Mammary epithelial cell (primary cell): ENCODE measurements at regions of chr10 and their contacts with region 1.

Region 1: GRCh38 chr10:75417522-75417927 is 13.9 kb upstream of the LRMDA start:
- DNase-seq: no peak
- H3K4me3 ChIP-seq: no peak overlapping the region
- H3K27ac ChIP-seq: no peak overlapping the region
- H3K4me1 ChIP-seq: peaks cover 9% of the 10 kb centered on the region
- H3K27me3 ChIP-seq: no peaks in the 10 kb centered on the region
- CTCF ChIP-seq: no peak

Region 2: GRCh38 chr10:74924251-74924951 is 493.1 kb before region 1 on chr10:
- CTCF ChIA-PET with region 1: no interaction called
- dilution Hi-C with region 1: no loop called
- in situ Hi-C with region 1: no loop called
- intact Hi-C with region 1: no loop called
- DNase-seq: peak; percentile 87
- H3K4me3 ChIP-seq: peak overlapping the region in 2 of 3 experiments; percentile 16 to 19
- H3K27ac ChIP-seq: peak overlapping the region; percentile 64
- H3K4me1 ChIP-seq: peaks cover 33% of the 10 kb centered on the region
- H3K27me3 ChIP-seq: no peaks in the 10 kb centered on the region
- CTCF ChIP-seq: no peak

Region 3: GRCh38 chr10:75432176-75432575 is 14.7 kb after region 1 on chr10:
- CTCF ChIA-PET with region 1: no interaction called
- dilution Hi-C with region 1: no loop called
- in situ Hi-C with region 1: no loop called
- intact Hi-C with region 1: no loop called
- DNase-seq: no peak
- H3K4me3 ChIP-seq: no peak overlapping the region
- H3K27ac ChIP-seq: no peak overlapping the region
- H3K4me1 ChIP-seq: peaks cover 42% of the 10 kb centered on the region
- H3K27me3 ChIP-seq: no peaks in the 10 kb centered on the region
- CTCF ChIP-seq: no peak

Region 4: DNA sequence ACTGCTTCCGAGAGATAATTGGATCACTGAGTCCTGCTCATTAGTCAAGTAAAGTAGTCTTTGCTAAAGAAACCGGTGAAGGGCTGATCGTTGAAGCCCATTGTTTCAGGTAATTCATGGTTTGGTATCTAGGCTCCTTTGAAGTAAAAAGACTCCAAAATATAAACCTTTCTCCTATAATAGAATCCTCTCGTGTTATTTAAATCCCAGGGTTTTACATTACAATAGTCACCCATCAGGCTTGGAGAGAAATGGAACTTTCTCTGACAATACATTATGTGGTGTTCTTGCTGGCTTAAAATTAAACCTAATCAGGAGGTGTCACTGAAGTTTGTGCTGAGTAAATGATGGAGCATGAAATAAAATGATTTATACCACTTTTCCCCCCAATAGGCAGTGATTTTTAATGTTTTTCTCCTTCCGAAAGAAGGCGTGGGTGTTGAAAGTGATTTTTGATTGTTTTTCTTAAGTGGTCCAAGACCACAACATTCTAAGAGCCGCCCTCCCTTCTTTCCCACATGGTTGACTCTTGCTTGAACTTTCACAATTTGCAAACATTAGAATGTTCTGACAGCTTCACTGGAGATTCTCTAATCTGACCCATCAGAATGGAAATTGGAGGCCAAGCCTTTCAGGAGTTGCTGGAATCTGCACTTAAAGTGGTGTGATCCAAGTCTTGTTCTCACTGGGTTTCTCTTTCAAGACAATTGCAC is 58.1 kb after region 1 on chr10:
- CTCF ChIA-PET with region 1: no interaction called
- dilution Hi-C with region 1: loop called (anchors 5 kb)
- in situ Hi-C with region 1: no loop called
- intact Hi-C with region 1: no loop called
- DNase-seq: no peak
- H3K4me3 ChIP-seq: no peak overlapping the region
- H3K27ac ChIP-seq: no peak overlapping the region
- H3K4me1 ChIP-seq: no peaks in the 10 kb centered on the region
- H3K27me3 ChIP-seq: no peaks in the 10 kb centered on the region
- CTCF ChIP-seq: no peak